Endothelial cell of umbilical vein (primary cell): ENCODE measurements at regions of chr11 and their contacts with region 1.

Region 1: GRCh38 chr11:304915-305843 is 2.4 kb upstream of the IFITM2 start:
- DNase-seq: peak; percentile 78
- H3K4me3 ChIP-seq: no peak overlapping the region
- H3K27ac ChIP-seq: no peak overlapping the region
- H3K4me1 ChIP-seq: peaks cover 15% of the 10 kb centered on the region
- H3K27me3 ChIP-seq: peaks cover 2 to 7% of the 10 kb centered on the region in 2 experiments
- CTCF ChIP-seq: peak; percentile 64 to 66
- POLR2A ChIP-seq: no peak

Region 2: DNA sequence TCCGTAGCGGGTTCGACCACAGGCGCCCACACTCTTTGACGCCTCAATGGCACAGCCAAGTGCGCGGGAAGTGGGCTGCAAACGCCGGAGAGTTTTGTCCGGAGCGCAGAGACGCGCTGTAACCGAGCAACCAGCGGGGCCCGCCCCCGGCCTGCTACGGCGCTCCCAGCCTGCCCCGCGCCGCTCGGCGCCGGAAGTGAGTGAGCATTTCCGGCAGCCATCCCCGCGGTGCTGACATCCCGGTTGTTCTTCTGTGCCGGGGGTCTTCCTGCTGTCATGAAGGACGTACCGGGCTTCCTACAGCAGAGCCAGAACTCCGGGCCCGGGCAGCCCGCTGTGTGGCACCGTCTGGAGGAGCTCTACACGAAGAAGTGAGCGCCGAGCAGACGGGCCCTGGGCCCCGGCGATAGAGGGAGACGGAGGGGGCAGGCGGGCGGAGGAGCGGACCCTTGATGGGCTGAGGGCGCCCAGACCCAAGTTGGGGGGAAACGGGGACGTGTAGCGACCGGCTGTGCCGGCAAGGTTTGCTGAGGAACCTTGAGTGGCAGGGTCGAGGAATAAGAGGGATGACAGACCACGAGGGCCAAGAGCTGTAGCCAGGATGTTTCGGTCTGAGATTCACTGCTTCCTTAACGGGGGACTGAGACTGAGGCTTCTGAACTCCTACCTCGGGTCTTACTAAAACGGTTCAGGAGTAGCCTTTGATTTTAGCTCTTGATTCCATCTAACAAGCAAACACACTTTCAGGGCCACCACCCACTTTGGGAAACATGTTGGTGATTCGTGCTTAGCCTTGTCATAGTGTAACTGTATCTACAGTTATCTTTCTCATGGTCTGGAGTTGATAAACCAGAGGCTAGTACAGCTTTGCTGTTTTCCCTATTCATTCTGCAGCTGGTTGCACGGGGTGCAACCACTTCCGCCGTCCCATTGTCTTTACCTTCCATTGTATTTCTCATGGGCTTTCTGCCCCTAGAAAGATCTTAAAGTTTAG is 68.1 kb before region 1 on chr11 and contains the start of gene PSMD13:
- CTCF ChIA-PET with region 1: interaction called, 4 read pairs
- POLR2A ChIA-PET with region 1: no interaction called
- dilution Hi-C with region 1: no loop called
- intact Hi-C with region 1: loop called (anchors 5 kb)
- DNase-seq: peak; percentile 85
- H3K4me3 ChIP-seq: peak within 1 kb of the TSS; percentile 81 to 100 (median 99)
- H3K27ac ChIP-seq: peak within 1 kb of the TSS; percentile 92
- H3K4me1 ChIP-seq: peaks cover 16% of the 10 kb centered on the region
- H3K27me3 ChIP-seq: no peaks in the 10 kb centered on the region
- CTCF ChIP-seq: no peak
- POLR2A ChIP-seq: peak; percentile 83
- total RNA-seq, gene PSMD13: 168 and 179 TPM in 2 replicates

Region 3: DNA sequence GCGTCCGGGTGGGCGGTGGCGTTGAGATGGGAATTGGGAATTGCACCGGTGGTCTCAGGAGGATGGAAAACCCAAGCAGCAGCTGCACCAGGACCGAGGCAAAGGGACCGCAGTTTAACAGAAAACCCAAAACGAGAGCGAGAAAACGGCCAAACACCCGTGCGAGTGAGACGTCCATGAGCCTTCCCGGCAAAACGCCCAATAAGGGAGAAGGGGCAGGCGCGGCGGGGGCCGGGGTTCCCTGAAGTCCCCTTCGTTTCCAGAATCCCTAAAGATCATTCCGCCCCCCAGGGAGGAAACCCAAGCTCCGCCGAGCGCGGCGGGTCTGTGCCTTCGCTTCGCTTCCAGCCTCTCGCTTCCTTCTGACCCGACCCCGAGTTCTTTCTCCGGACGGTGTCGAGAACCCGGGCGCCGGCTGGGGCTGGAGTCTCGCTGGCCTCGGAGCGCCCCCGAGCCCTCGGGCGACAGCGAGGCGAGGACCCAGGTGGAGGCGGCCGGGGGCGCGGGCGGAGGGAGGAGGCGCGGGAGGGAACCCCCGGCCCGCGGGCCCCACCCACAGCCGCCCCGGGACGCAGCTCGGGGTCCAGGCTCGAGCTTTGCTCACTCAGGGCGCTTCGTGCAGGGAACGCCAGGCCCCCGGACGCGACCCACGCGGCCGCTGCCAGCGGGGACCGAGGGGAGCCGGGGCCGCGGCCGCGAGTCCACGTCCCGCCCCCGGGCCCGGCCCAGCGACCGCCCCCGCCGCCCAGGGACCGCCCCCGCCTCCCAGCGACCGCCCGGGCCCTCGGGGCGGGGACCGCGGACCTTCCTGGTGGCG is 16.6 kb before region 1 on chr11 and contains the start of gene PGGHG:
- CTCF ChIA-PET with region 1: interaction called, 11 read pairs
- POLR2A ChIA-PET with region 1: no interaction called
- dilution Hi-C with region 1: no loop called
- intact Hi-C with region 1: no loop called
- DNase-seq: no peak
- H3K4me3 ChIP-seq: peak within 1 kb of the TSS; percentile 4 to 58 (median 7)
- H3K27ac ChIP-seq: no peak within 1 kb of the TSS
- H3K4me1 ChIP-seq: peaks cover 3% of the 10 kb centered on the region
- H3K27me3 ChIP-seq: peaks cover 8% of the 10 kb centered on the region in 2 experiments
- CTCF ChIP-seq: no peak
- POLR2A ChIP-seq: no peak
- total RNA-seq, gene PGGHG: 42.4 and 48.1 TPM in 2 replicates

Region 4: GRCh38 chr11:355581-356458 is 50.6 kb after region 1 on chr11:
- CTCF ChIA-PET with region 1: interaction called, 79 read pairs
- POLR2A ChIA-PET with region 1: interaction called, 7 read pairs
- dilution Hi-C with region 1: no loop called
- intact Hi-C with region 1: loop called (anchors 1 kb)
- DNase-seq: peak; percentile 96
- H3K4me3 ChIP-seq: peak overlapping the region in 1 of 3 experiments; percentile 14
- H3K27ac ChIP-seq: peak overlapping the region; percentile 96
- H3K4me1 ChIP-seq: peaks cover 8% of the 10 kb centered on the region
- H3K27me3 ChIP-seq: no peaks in the 10 kb centered on the region
- CTCF ChIP-seq: no peak
- POLR2A ChIP-seq: peak; percentile 77

Region 5: DNA sequence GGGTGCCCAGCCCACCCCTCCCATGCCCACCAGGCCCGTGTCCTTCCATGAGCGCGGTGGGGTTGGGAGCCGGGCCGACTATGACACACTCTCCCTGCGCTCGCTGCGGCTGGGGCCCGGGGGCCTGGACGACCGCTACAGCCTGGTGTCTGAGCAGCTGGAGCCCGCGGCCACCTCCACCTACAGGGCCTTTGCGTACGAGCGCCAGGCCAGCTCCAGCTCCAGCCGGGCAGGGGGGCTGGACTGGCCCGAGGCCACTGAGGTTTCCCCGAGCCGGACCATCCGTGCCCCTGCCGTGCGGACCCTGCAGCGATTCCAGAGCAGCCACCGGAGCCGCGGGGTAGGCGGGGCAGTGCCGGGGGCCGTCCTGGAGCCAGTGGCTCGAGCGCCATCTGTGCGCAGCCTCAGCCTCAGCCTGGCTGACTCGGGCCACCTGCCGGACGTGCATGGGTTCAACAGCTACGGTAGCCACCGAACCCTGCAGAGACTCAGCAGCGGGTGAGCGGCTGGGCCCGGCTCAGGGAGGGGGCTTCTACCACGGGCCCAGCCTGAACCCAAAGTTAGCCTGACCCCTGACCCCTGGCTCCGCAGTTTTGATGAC is 91.9 kb after region 1 on chr11:
- CTCF ChIA-PET with region 1: interaction called, 19 read pairs
- POLR2A ChIA-PET with region 1: interaction called, 5 read pairs
- dilution Hi-C with region 1: no loop called
- intact Hi-C with region 1: no loop called
- DNase-seq: peak; percentile 66
- H3K4me3 ChIP-seq: peak overlapping the region; percentile 6 to 43 (median 35)
- H3K27ac ChIP-seq: no peak overlapping the region
- H3K4me1 ChIP-seq: peaks cover 2% of the 10 kb centered on the region
- H3K27me3 ChIP-seq: peaks cover 0 to 3% of the 10 kb centered on the region in 2 experiments
- CTCF ChIP-seq: peak; percentile 44 to 80
- POLR2A ChIP-seq: no peak

Region 6: GRCh38 chr11:469684-470560 is 164.7 kb after region 1 on chr11:
- CTCF ChIA-PET with region 1: no interaction called
- POLR2A ChIA-PET with region 1: no interaction called
- dilution Hi-C with region 1: no loop called
- intact Hi-C with region 1: no loop called
- DNase-seq: peak; percentile 90
- H3K4me3 ChIP-seq: no peak overlapping the region
- H3K27ac ChIP-seq: peak overlapping the region; percentile 18
- H3K4me1 ChIP-seq: peaks cover 10% of the 10 kb centered on the region
- H3K27me3 ChIP-seq: no peaks in the 10 kb centered on the region
- CTCF ChIP-seq: peak in 1 of 2 donors; percentile 11
- POLR2A ChIP-seq: peak; percentile 30